Dorsolateral prefrontal cortex (tissue), 120 donors: ENCODE measurements at regions of chr4 and their contacts with region 1.

Region 1: GRCh38 chr4:101347557-101348366 is 436 bp upstream of the PPP3CA start:
- DNase-seq: peak; percentile 97 to 100 (median 99)
- H3K4me3 ChIP-seq: peak overlapping the region; percentile 69 to 98 (median 88)
- H3K27ac ChIP-seq: peak overlapping the region; percentile 92 to 100 (median 98)
- H3K27me3 ChIP-seq: no peaks in the 10 kb centered on the region
- CTCF ChIP-seq: peak in 18 of 56 donors; percentile 4 to 36 (median 23)

Region 2: DNA sequence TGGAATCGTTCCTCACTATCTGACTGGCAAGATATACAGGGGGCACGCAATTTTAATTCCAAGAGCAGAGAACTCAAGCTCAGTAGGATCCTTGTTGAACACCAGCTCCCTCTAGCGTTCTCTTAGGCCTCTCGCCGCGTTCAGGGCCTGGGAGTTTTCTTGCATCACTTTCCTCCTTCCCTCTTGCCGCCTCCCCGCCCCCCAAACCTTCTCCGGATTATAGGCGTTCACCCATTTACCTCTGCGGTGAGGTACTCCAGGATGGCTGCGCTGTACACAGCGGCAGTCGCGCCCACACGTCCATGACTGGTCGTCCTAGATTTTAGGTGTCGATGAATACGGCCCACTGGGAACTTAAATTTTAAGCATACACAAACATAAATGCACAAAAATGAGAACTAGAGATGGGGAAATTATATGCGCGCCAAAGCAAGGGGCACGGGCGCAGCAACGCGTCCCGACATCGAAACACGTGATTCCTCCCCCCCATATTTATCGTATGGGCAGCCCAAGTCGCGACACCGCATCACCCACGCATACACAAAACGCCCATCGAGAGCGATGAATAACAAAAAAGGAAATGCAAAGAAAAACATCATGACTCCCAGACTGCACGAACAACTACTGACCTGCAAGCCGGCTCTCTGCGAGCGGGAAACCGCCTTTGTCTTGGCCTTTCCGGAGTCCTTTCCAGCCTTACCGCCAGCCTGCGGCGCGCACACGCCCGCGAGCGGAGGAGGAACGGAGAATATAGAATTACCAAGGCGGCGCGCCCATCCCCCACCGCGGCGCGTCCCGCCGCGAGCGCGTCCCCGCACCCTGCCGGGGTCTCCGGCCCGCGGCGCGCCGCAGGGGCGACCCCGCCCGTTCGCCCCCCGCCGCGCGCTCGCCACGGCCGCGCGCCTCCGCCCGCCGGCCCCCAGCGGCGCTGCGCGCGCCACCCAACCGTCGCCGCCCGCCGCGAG is 1398.4 kb before region 1 on chr4:
- intact Hi-C with region 1: loop called in 1 of 2 experiments (anchors 10 kb)
- DNase-seq: peak; percentile 68 to 92 (median 88)
- H3K4me3 ChIP-seq: peak overlapping the region; percentile 63 to 97 (median 89)
- H3K27ac ChIP-seq: peak overlapping the region; percentile 74 to 98 (median 94)
- H3K27me3 ChIP-seq: no peaks in the 10 kb centered on the region
- CTCF ChIP-seq: peak; percentile 64 to 91 (median 83)

Region 3: GRCh38 chr4:101103381-101104142 is 244.2 kb before region 1 on chr4:
- intact Hi-C with region 1: loop called in 1 of 2 experiments (anchors 5 kb)
- DNase-seq: no peak
- H3K4me3 ChIP-seq: peak overlapping the region in 22 of 59 donors; percentile 0 to 35 (median 18)
- H3K27ac ChIP-seq: peak overlapping the region; percentile 3 to 88 (median 76)
- H3K27me3 ChIP-seq: no peaks in the 10 kb centered on the region
- CTCF ChIP-seq: no peak

Region 4: GRCh38 chr4:101114936-101115372 is 232.8 kb before region 1 on chr4:
- intact Hi-C with region 1: loop called in 1 of 2 experiments (anchors 5 kb)
- DNase-seq: peak in 1 of 10 donors; percentile 28
- H3K4me3 ChIP-seq: peak overlapping the region in 19 of 59 donors; percentile 0 to 48 (median 18)
- H3K27ac ChIP-seq: peak overlapping the region; percentile 43 to 97 (median 87)
- H3K27me3 ChIP-seq: no peaks in the 10 kb centered on the region
- CTCF ChIP-seq: peak in 4 of 56 donors; percentile 11 to 22 (median 15)

Region 5: DNA sequence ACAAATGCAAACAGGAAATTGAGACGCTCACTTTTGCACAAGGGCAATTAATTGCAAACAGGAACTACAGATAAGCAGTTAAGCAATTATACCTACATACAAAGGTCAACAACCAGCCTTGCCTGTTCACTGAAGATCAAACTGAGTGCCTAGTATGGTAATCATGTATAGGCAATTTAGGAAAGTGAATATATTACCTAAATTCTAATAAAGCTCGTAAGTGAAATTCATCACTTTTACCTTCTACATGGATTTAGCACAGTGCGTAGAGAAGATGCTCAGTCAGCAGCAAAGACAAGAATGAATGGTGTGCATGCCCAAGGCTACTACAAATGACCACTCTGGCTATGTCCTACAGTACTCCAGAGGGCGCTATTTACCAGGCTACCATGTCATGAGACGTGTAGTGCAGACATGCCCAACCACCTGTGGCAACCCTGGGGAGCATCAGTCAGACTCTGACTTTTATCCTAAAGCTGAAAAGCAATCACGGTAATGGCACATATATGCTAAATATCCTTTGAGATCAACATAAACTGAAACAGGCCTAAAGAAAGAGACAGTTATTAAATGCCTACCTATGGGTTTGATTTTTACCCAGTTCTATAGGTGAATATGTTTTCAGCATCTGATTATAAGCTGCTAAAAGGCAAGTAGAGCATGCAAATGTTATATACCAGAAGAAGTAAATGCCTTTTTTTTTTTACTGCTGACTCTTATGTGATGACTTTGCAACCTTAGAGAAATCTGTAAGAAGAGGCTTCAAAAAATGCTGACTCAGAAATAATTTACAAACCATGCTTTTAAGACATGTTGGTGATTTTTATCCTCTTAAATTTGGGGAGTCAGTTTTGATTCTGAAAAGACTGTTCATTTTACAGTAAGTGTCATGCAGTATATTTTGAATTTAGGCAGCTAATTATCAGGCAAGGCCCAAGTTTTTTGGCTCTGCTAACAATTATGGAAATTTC is 178.4 kb before region 1 on chr4:
- intact Hi-C with region 1: loop called in 1 of 2 experiments (anchors 10 kb)
- DNase-seq: peak in 6 of 10 donors; percentile 31 to 79 (median 47)
- H3K4me3 ChIP-seq: no peak overlapping the region
- H3K27ac ChIP-seq: no peak overlapping the region
- H3K27me3 ChIP-seq: no peaks in the 10 kb centered on the region
- CTCF ChIP-seq: peak in 55 of 56 donors; percentile 43 to 86 (median 72)

Region 6: DNA sequence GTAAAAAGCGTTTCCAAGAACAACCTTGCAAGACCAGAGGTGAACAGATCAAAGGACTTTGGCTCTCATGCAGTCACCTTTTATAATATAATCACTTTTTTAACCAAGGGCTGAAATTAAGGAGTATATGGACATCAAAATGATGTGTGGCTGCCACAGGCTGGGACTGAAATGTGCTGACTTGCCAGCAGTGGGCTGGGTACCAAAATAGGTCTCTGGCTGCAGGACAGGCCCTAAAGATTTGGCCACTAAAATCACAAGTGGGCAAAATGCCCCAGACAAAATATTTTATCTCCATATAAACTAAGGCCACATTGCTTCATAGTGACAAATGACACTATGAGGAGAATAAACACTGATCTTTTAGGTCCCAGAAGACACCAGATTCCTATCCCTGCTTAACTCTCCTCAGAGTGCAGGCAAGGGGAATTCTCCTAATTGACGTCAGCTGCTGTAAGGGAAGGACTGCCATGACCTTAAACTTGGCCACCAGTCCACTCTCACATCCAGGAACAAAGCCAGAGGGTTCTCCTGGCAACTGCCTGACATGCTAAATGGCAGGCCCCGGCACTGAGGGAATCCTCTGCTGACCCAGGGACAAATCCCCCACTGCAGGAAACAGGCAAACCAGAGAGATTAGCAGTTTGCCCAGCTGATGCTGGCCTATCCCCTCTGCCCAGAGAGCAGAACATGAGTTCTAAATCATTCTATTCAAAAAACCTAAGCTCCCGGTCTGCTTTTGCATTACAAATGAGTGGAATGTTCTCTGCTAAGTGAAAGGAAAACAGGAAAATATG is 156.3 kb before region 1 on chr4:
- intact Hi-C with region 1: loop called in 1 of 2 experiments (anchors 5 kb)
- DNase-seq: peak in 8 of 10 donors; percentile 28 to 74 (median 56)
- H3K4me3 ChIP-seq: peak overlapping the region in 5 of 59 donors; percentile 8 to 32 (median 19)
- H3K27ac ChIP-seq: peak overlapping the region in 53 of 59 donors; percentile 2 to 82 (median 62)
- H3K27me3 ChIP-seq: no peaks in the 10 kb centered on the region
- CTCF ChIP-seq: no peak

Region 7: GRCh38 chr4:101304916-101305315 is 42.8 kb before region 1 on chr4:
- intact Hi-C with region 1: loop called in 1 of 2 experiments (anchors 2 kb)
- DNase-seq: no peak
- H3K4me3 ChIP-seq: peak overlapping the region in 21 of 59 donors; percentile 1 to 31 (median 9)
- H3K27ac ChIP-seq: peak overlapping the region in 27 of 59 donors; percentile 8 to 71 (median 33)
- H3K27me3 ChIP-seq: no peaks in the 10 kb centered on the region
- CTCF ChIP-seq: peak in 2 of 56 donors; percentile 11 to 15

Region 8: GRCh38 chr4:101393250-101393649 is 45.5 kb after region 1 on chr4:
- intact Hi-C with region 1: no loop called
- DNase-seq: no peak
- H3K4me3 ChIP-seq: no peak overlapping the region
- H3K27ac ChIP-seq: no peak overlapping the region
- H3K27me3 ChIP-seq: no peaks in the 10 kb centered on the region
- CTCF ChIP-seq: no peak